A673 (cell line): ENCODE measurements at regions of chr11 and their contacts with region 1.

Region 1: DNA sequence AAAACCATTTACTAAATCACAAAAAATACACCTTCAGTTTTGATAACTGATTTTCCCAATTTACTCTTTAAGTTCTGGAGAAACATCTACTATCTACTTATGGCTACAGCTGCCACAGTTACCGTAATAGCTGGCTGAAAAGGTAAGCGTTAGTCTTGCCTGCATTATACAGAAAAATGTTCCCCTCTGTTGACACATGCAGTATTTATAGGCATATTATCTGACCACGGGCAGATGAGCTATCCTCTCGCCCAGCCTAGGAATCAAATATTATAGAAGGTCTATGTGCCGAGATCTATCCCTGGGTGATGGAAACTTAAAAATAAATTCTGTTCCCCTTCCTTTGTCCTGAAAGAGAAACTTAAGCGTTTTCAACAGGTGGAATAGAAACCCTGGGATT is 283.8 kb downstream of the CADM1 start:
- DNase-seq: no peak
- H3K4me3 ChIP-seq: no peak overlapping the region
- H3K27ac ChIP-seq: no peak overlapping the region
- H3K4me1 ChIP-seq: no peaks in the 10 kb centered on the region
- H3K27me3 ChIP-seq: no peaks in the 10 kb centered on the region
- CTCF ChIP-seq: no peak

Region 2: GRCh38 chr11:114928260-114928870 is 292.1 kb before region 1 on chr11:
- CTCF ChIA-PET with region 1: no interaction called
- POLR2A ChIA-PET with region 1: no interaction called
- intact Hi-C with region 1: no loop called
- DNase-seq: no peak
- H3K4me3 ChIP-seq: no peak overlapping the region
- H3K27ac ChIP-seq: no peak overlapping the region
- H3K4me1 ChIP-seq: no peaks in the 10 kb centered on the region
- H3K27me3 ChIP-seq: no peaks in the 10 kb centered on the region
- CTCF ChIP-seq: no peak

Region 3: GRCh38 chr11:115042002-115042401 is 178.4 kb before region 1 on chr11:
- CTCF ChIA-PET with region 1: no interaction called
- POLR2A ChIA-PET with region 1: no interaction called
- intact Hi-C with region 1: no loop called
- DNase-seq: no peak
- H3K4me3 ChIP-seq: no peak overlapping the region
- H3K27ac ChIP-seq: no peak overlapping the region
- H3K4me1 ChIP-seq: no peaks in the 10 kb centered on the region
- H3K27me3 ChIP-seq: no peaks in the 10 kb centered on the region
- CTCF ChIP-seq: no peak

Region 4: GRCh38 chr11:115193914-115194801 is 26.3 kb before region 1 on chr11:
- CTCF ChIA-PET with region 1: no interaction called
- POLR2A ChIA-PET with region 1: no interaction called
- intact Hi-C with region 1: loop called (anchors 1 kb)
- DNase-seq: no peak
- H3K4me3 ChIP-seq: no peak overlapping the region
- H3K27ac ChIP-seq: no peak overlapping the region
- H3K4me1 ChIP-seq: no peaks in the 10 kb centered on the region
- H3K27me3 ChIP-seq: no peaks in the 10 kb centered on the region
- CTCF ChIP-seq: no peak